Heart right ventricle (tissue), 16 donors: ENCODE measurements at regions of chrX and their contacts with region 1.

Region 1: GRCh38 chrX:29518100-29518499 is 697.3 kb upstream of the MAGEB2 start:
- DNase-seq: no peak
- ATAC-seq: no peak
- H3K4me3 ChIP-seq: no peak overlapping the region
- H3K27ac ChIP-seq: no peak overlapping the region
- H3K4me1 ChIP-seq: no peaks in the 10 kb centered on the region
- H3K27me3 ChIP-seq: no peaks in the 10 kb centered on the region
- CTCF ChIP-seq: no peak

Region 2: GRCh38 chrX:29555465-29556091 is 37.5 kb after region 1 on chrX:
- intact Hi-C with region 1: loop called in 1 of 10 experiments (anchors 1 kb)
- DNase-seq: no peak
- ATAC-seq: no peak
- H3K4me3 ChIP-seq: no peak overlapping the region
- H3K27ac ChIP-seq: no peak overlapping the region
- H3K4me1 ChIP-seq: no peaks in the 10 kb centered on the region
- H3K27me3 ChIP-seq: no peaks in the 10 kb centered on the region
- CTCF ChIP-seq: no peak